Natural killer cell (primary cell): ENCODE measurements at regions of chr19 and their contacts with region 1.

Region 1: DNA sequence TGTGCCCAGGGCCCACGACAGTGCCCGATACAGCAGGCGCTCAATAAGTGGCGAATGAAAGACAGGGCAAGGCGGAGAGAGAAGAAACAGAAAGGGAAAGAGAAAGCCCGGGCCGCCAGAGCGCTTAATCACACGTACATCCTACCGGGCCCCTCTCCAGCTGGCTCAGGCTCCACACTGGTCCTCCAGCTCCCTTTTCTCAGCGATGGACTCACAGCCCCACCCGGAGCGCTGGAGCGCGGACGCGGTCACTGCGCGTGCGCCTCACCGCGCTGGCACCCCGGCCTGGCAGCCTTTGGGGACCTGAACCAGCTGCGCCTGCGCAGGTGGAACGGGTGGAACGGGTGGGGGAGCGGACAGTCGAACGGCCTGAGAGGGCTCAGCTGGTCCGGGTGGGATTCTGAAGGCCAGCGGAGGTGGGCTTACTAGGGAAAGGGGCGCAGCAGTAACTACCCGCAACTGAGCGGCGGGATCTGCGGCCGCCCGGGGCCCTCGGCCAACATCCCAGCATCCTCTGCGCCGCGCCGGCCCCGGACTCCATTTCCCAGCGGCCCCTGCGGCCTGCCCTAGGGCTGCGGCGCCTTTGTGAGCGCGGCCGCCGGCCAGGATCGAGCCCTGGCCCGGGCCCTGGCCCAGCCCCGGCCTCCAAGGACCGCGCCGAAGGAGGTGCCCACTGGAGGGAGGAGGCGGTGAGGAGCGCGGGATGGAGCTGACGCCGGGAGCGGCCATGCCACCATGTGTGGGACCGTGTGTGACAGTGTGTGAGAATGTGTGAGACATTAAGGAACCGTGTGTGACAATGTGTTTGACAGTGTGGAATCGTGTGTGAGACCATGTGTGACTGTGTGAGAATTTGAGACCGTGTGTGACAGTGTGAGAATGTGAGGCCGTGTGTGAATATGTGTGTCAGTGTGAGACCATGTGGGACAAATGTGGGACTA is at the start of gene ZNF583:
- DNase-seq: peak; percentile 90 to 95
- ATAC-seq: peak; percentile 57 to 87 (median 78)
- H3K4me3 ChIP-seq: peak within 1 kb of the TSS; percentile 88
- H3K4me3 Mint-ChIP-seq: peak within 1 kb of the TSS; percentile 92
- H3K27ac ChIP-seq: peak within 1 kb of the TSS; percentile 99
- H3K27ac Mint-ChIP-seq: peak within 1 kb of the TSS; percentile 71 to 93
- H3K4me1 ChIP-seq: peaks cover 22% of the 10 kb centered on the region
- H3K4me1 Mint-ChIP-seq: peaks cover 19 to 43% of the 10 kb centered on the region in 2 donors
- H3K27me3 ChIP-seq: no peaks in the 10 kb centered on the region
- H3K27me3 Mint-ChIP-seq: no peaks in the 10 kb centered on the region
- CTCF ChIP-seq: no peak
- total RNA-seq, gene ZNF583: 2.7 to 5.1 (median 3.3) TPM

Region 2: GRCh38 chr19:56477429-56478338 is 73.7 kb after region 1 on chr19:
- intact Hi-C with region 1: loop called (anchors 2 kb)
- DNase-seq: peak; percentile 49 to 58
- ATAC-seq: peak; percentile 57 to 68 (median 67)
- H3K4me3 ChIP-seq: peak overlapping the region; percentile 41
- H3K4me3 Mint-ChIP-seq: peak overlapping the region; percentile 87
- H3K27ac ChIP-seq: peak overlapping the region; percentile 91
- H3K27ac Mint-ChIP-seq: peak overlapping the region; percentile 43 to 95
- H3K4me1 ChIP-seq: peaks cover 20% of the 10 kb centered on the region
- H3K4me1 Mint-ChIP-seq: peaks cover 9 to 31% of the 10 kb centered on the region in 2 donors
- H3K27me3 ChIP-seq: no peaks in the 10 kb centered on the region
- H3K27me3 Mint-ChIP-seq: peaks cover 12 to 14% of the 10 kb centered on the region in 2 donors
- CTCF ChIP-seq: no peak

Region 3: DNA sequence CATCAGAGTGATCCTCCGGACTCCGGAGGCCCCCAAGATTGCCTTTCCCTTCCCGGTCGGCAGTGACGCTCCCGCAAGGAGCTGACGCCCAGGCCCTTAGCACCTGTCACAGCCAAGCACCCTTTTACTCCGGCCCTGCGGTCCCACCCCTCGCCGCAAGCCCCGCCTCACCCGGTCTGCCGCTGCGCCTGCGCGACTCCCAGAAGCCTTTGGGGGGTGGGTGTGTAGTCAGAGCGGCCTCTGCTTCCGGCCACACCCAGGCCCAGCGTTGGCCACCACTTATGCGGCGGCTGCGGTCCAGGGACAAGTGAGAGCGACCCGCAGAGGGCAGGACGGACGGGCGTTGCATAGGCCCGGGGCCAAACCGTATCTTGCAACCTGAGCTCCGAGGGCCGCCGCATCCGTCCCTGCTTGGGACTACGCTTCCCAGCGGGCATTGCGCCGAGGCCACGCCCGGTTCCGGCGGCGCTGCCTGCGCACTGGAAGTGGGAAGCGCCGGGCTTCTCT is 134.3 kb after region 1 on chr19:
- intact Hi-C with region 1: loop called (anchors 1 kb)
- DNase-seq: peak; percentile 88 to 91
- ATAC-seq: peak; percentile 89 to 92 (median 90)
- H3K4me3 ChIP-seq: peak overlapping the region; percentile 64
- H3K4me3 Mint-ChIP-seq: peak overlapping the region; percentile 91
- H3K27ac ChIP-seq: peak overlapping the region; percentile 80
- H3K27ac Mint-ChIP-seq: peak overlapping the region; percentile 80 to 95
- H3K4me1 ChIP-seq: peaks cover 19% of the 10 kb centered on the region
- H3K4me1 Mint-ChIP-seq: peaks cover 20 to 36% of the 10 kb centered on the region in 2 donors
- H3K27me3 ChIP-seq: no peaks in the 10 kb centered on the region
- H3K27me3 Mint-ChIP-seq: peaks cover 0 to 2% of the 10 kb centered on the region in 2 donors
- CTCF ChIP-seq: no peak